Gastrocnemius medialis (tissue), 4 donors: ENCODE measurements at regions of chr2 and their contacts with region 1.

Region 1: GRCh38 chr2:1817256-1818051 is 73.1 kb upstream of the PXDN start:
- DNase-seq: peak; percentile 78 to 87
- ATAC-seq: peak; percentile 92 to 95
- H3K4me3 ChIP-seq: no peak overlapping the region
- H3K27ac ChIP-seq: peak overlapping the region; percentile 63 to 82 (median 78)
- H3K4me1 ChIP-seq: peaks cover 7 to 14% of the 10 kb centered on the region in 2 donors
- H3K27me3 ChIP-seq: no peaks in the 10 kb centered on the region
- CTCF ChIP-seq: peak; percentile 88 to 99 (median 93)
- POLR2A ChIP-seq: no peak

Region 2: GRCh38 chr2:677056-677965 is 1140.1 kb before region 1 on chr2 and contains the start of gene TMEM18:
- in situ Hi-C with region 1: no loop called
- intact Hi-C with region 1: loop called (anchors 5 kb)
- DNase-seq: peak; percentile 89 to 92
- ATAC-seq: peak; percentile 89 to 90
- H3K4me3 ChIP-seq: peak within 1 kb of the TSS; percentile 80 to 95 (median 91)
- H3K27ac ChIP-seq: peak within 1 kb of the TSS; percentile 91 to 99 (median 94)
- H3K4me1 ChIP-seq: peaks cover 4 to 22% of the 10 kb centered on the region in 2 donors
- H3K27me3 ChIP-seq: no peaks in the 10 kb centered on the region
- CTCF ChIP-seq: peak in 3 of 5 experiments; percentile 5 to 30 (median 11)
- POLR2A ChIP-seq: peak; percentile 73 to 78
- total RNA-seq, gene TMEM18: 9.0 to 26.1 (median 12.3) TPM

Region 3: GRCh38 chr2:1550658-1551316 is 266.7 kb before region 1 on chr2:
- in situ Hi-C with region 1: no loop called
- intact Hi-C with region 1: loop called (anchors 5 kb)
- DNase-seq: no peak
- ATAC-seq: peak; percentile 45 to 66
- H3K4me3 ChIP-seq: no peak overlapping the region
- H3K27ac ChIP-seq: no peak overlapping the region
- H3K4me1 ChIP-seq: peaks cover 0 to 11% of the 10 kb centered on the region in 2 donors
- H3K27me3 ChIP-seq: peaks cover 0 to 4% (median 0%) of the 10 kb centered on the region in 3 donors
- CTCF ChIP-seq: peak; percentile 26 to 93 (median 83)
- POLR2A ChIP-seq: no peak

Region 4: GRCh38 chr2:1591978-1592907 is 225.2 kb before region 1 on chr2:
- in situ Hi-C with region 1: no loop called
- intact Hi-C with region 1: loop called (anchors 5 kb)
- DNase-seq: peak in 1 of 2 donors; percentile 43
- ATAC-seq: peak in 1 of 2 donors; percentile 25
- H3K4me3 ChIP-seq: peak overlapping the region in 1 of 4 donors; percentile 1
- H3K27ac ChIP-seq: peak overlapping the region in 1 of 4 donors; percentile 25
- H3K4me1 ChIP-seq: peaks cover 0 to 13% of the 10 kb centered on the region in 2 donors
- H3K27me3 ChIP-seq: peaks cover 4 to 13% (median 11%) of the 10 kb centered on the region in 3 donors
- CTCF ChIP-seq: peak; percentile 34 to 52 (median 46)
- POLR2A ChIP-seq: no peak

Region 5: GRCh38 chr2:1653956-1654695 is 163.3 kb before region 1 on chr2:
- in situ Hi-C with region 1: no loop called
- intact Hi-C with region 1: loop called (anchors 10 kb)
- DNase-seq: no peak
- ATAC-seq: no peak
- H3K4me3 ChIP-seq: no peak overlapping the region
- H3K27ac ChIP-seq: peak overlapping the region; percentile 35 to 54 (median 44)
- H3K4me1 ChIP-seq: no peaks in the 10 kb centered on the region
- H3K27me3 ChIP-seq: peaks cover 0 to 9% (median 5%) of the 10 kb centered on the region in 3 donors
- CTCF ChIP-seq: no peak
- POLR2A ChIP-seq: no peak

Region 6: GRCh38 chr2:1750933-1751766 is 66.3 kb before region 1 on chr2:
- in situ Hi-C with region 1: no loop called
- intact Hi-C with region 1: loop called (anchors 5 kb)
- DNase-seq: peak in 1 of 2 donors; percentile 41
- ATAC-seq: peak; percentile 64 to 76
- H3K4me3 ChIP-seq: no peak overlapping the region
- H3K27ac ChIP-seq: no peak overlapping the region
- H3K4me1 ChIP-seq: no peaks in the 10 kb centered on the region
- H3K27me3 ChIP-seq: peaks cover 3 to 14% (median 5%) of the 10 kb centered on the region in 3 donors
- CTCF ChIP-seq: peak; percentile 38 to 79 (median 62)
- POLR2A ChIP-seq: no peak

Region 7: DNA sequence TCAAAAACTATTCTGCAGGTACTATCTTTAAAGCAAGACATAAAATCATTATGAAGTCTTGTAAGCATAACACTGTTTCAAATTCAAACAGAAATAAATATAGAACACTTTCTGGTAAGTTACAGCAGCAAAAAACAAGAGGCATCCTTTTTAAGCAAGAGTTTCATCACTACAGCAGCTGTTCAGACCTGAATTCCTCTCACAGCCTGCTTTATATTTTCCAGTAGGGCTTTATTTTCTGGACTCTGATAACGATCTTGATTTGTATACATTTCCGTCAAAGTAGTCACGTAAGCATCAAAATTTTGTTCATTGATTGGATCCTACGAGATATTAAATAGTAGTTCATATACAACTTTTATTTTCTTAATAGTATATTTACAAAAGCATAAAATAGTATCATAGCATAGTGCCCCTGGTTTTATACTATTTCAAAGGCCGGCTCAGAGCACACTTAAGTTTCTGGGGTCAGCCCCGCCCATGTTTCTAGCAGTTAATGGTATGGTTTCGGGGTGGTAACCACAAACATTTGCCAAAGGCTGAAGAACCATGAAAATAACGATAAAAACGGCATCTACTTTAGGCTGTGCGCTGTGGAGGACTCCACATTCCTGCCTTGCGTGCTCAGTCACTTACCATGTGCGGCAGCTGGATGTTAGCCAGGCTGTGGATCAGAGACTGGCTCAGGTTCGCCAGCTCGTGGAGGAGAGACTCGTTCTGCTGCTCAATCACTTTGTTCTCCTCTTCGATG is 25.6 kb before region 1 on chr2:
- in situ Hi-C with region 1: no loop called
- intact Hi-C with region 1: loop called (anchors 1 kb)
- DNase-seq: peak; percentile 44 to 57
- ATAC-seq: peak; percentile 81 to 87
- H3K4me3 ChIP-seq: peak overlapping the region; percentile 16 to 30 (median 19)
- H3K27ac ChIP-seq: peak overlapping the region in 3 of 4 donors; percentile 3 to 60 (median 19)
- H3K4me1 ChIP-seq: peaks cover 7% of the 10 kb centered on the region in 2 donors
- H3K27me3 ChIP-seq: no peaks in the 10 kb centered on the region
- CTCF ChIP-seq: no peak
- POLR2A ChIP-seq: no peak

Region 8: DNA sequence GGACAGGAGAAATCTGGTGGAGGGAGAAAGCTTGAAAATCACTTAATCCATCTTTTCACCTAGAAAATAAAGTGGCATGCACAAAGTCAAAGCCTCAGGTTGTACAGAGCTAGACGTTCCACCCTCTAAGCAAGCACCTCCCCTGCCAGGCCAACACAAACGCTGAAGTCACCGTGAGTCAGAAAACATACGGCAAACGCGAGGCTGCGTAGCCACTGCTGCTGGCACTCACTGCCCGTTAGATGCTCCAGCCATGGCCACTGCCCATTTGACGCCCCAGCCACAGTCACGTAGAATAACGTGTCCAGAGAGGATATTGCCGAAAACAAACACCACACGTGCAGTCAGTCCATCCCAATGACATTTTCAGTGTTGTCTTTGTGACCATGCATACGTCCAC is 136.6 kb after region 1 on chr2:
- in situ Hi-C with region 1: no loop called
- intact Hi-C with region 1: no loop called
- DNase-seq: no peak
- ATAC-seq: no peak
- H3K4me3 ChIP-seq: no peak overlapping the region
- H3K27ac ChIP-seq: no peak overlapping the region
- H3K4me1 ChIP-seq: no peaks in the 10 kb centered on the region
- H3K27me3 ChIP-seq: no peaks in the 10 kb centered on the region
- CTCF ChIP-seq: no peak
- POLR2A ChIP-seq: no peak

Region 9: GRCh38 chr2:2101924-2102323 is 284.5 kb after region 1 on chr2:
- in situ Hi-C with region 1: no loop called
- intact Hi-C with region 1: no loop called
- DNase-seq: no peak
- ATAC-seq: no peak
- H3K4me3 ChIP-seq: no peak overlapping the region
- H3K27ac ChIP-seq: no peak overlapping the region
- H3K4me1 ChIP-seq: no peaks in the 10 kb centered on the region
- H3K27me3 ChIP-seq: no peaks in the 10 kb centered on the region
- CTCF ChIP-seq: peak in 1 of 5 experiments; percentile 20
- POLR2A ChIP-seq: no peak